WTC11 (cell line): ENCODE measurements at regions of chr7 and their contacts with region 1.

Region 1: GRCh38 chr7:35801392-35802101 is 690 bp downstream of the SEPTIN7 start:
- DNase-seq: peak; percentile 67
- ATAC-seq: peak; percentile 3
- H3K4me3 Mint-ChIP-seq: peak overlapping the region; percentile 90
- H3K27ac Mint-ChIP-seq: peak overlapping the region; percentile 91; the same call in 1 of the 2 replicates
- H3K4me1 Mint-ChIP-seq: peaks cover 41% of the 10 kb centered on the region
- H3K27me3 Mint-ChIP-seq: no peaks in the 10 kb centered on the region
- CTCF ChIP-seq: peak; percentile 62

Region 2: DNA sequence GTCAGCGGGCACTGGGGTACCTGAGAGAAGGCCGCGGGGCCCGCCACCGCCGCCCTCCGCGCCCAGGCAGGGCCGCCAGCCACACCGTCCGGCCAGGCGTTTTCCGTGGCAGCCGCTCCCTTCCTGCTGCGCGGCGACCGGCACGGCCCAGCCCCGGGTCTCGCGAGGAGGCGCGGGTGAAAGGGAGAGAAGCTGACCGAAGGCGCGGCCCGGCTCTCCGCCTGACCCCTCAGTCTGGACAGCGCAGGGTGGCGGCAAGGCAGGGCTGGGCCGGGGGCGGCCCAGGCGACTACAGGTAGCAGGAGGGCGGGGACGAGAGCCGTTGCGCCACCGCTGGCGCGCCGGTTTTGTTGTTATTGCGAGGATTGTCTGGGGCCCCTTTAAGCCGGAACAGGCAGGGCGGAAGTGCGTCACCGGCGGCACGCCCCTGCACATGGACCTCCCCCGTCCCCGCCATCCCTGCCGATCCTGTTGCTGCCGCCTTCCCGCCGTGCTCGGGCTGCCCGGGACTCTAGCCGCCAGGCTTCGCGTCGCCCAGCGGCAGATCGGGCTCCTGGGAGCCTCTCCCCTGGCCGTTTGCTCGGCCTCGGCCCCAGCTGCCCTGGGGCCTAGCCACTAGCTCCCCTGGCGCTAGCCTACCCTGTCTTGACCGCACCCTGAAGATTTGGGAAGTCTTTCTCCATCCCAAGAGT is 106.6 kb before region 1 on chr7 and contains the start of gene HERPUD2:
- CTCF ChIA-PET with region 1: interaction called, 4 read pairs
- POLR2A ChIA-PET with region 1: interaction called, 12 read pairs
- DNase-seq: peak; percentile 94
- ATAC-seq: peak; percentile 93
- H3K4me3 Mint-ChIP-seq: peak within 1 kb of the TSS; percentile 92
- H3K27ac Mint-ChIP-seq: peak within 1 kb of the TSS; percentile 93
- H3K4me1 Mint-ChIP-seq: peaks cover 44% of the 10 kb centered on the region
- H3K27me3 Mint-ChIP-seq: peaks cover 10% of the 10 kb centered on the region
- CTCF ChIP-seq: no peak
- total RNA-seq, gene HERPUD2: 15.5 to 18.5 TPM (median 16.2 TPM) in 3 replicates

Region 3: DNA sequence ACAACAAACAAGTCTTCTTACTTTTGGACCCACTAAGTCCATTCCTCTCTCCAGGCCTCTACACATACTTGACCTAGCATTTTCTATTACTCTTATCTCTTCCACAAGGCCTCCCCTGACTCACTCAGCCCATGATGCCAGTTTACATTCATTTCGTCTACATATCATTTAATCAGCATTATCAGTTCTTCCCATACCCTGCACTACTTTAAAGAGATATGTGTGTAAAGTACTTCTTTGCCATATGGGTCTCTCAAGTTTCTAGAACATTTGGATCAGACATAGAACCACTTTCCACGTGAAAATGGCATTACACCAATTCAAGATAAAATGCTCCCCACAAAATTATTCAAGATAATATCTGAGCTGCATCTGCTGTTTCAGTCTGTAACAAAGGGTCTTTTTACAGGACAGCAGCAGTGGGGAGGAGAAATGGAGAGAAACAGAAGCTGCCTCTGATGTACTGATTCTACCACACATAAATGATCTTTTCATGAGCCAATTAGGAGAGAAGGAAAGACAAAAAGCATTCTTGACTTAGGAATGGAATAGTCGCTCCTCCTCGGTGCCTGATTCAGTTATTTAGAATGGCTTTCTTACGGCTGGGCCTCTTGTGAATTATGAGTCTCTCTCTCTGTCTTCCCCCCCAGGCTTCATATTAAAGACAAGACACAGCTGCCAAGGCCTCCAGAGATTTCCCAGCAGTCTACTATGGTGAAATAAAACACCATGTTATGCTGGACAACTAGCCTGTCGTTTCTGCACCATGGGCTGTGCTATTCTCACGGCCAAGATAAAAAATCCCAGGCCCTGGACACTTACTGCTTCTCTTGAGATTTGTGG is 47.6 kb before region 1 on chr7:
- CTCF ChIA-PET with region 1: no interaction called
- POLR2A ChIA-PET with region 1: no interaction called
- DNase-seq: no peak
- ATAC-seq: no peak
- H3K4me3 Mint-ChIP-seq: no peak overlapping the region
- H3K27ac Mint-ChIP-seq: no peak overlapping the region
- H3K4me1 Mint-ChIP-seq: peaks cover 24% of the 10 kb centered on the region
- H3K27me3 Mint-ChIP-seq: no peaks in the 10 kb centered on the region
- CTCF ChIP-seq: no peak

Region 4: DNA sequence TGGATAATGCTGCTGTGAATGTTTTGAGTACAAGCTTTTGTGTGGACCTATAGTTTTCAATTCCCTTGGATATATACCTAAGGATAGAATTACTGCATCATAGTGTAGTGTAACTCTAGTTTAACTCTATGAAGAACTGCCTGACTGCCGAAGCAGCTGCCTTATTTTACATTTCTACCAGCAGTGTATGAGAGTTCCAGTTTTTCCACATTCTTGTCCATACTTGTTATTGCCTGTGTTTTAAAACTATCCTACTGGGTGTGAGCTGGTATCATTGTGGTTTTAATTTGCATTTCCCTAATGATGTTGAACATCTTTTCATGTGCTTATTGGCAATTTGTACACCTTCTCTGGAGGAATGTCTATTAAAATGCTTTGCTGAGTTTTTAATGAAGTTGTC is 15.0 kb after region 1 on chr7:
- CTCF ChIA-PET with region 1: interaction called, 4 read pairs
- POLR2A ChIA-PET with region 1: interaction called, 16 read pairs
- DNase-seq: no peak
- ATAC-seq: no peak
- H3K4me3 Mint-ChIP-seq: no peak overlapping the region
- H3K27ac Mint-ChIP-seq: peak overlapping the region; percentile 0; the same call in 1 of the 2 replicates
- H3K4me1 Mint-ChIP-seq: peaks cover 66% of the 10 kb centered on the region
- H3K27me3 Mint-ChIP-seq: no peaks in the 10 kb centered on the region
- CTCF ChIP-seq: no peak